B cell (primary cell): ENCODE measurements at regions of chr12 and their contacts with region 1.

Region 1: DNA sequence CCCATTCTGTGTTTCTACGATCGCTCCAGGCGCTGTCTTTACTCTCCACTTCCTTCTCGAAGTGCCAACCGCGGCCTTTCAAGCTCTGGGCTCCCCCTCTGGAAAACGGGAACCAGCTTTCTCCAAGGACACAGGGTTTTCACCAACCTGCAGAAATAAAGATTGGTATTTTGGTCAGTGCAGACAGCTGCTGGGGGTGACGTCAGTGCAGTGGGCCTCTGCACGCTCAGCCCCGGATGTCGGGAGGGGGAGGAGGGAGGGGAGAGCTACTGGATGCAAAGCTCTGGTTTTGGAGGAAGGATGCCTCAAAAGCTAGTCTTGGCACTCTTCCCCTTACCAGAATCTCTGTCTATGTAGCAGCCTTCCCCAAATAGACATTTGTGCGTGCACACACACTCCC is 19.9 kb downstream of the HRK start:
- DNase-seq: peak; percentile 77
- ATAC-seq: peak; percentile 67
- H3K4me3 ChIP-seq: no peak overlapping the region
- H3K4me3 Mint-ChIP-seq: peak overlapping the region; percentile 78
- H3K27ac ChIP-seq: no peak overlapping the region
- H3K27ac Mint-ChIP-seq: peak overlapping the region; percentile 86
- H3K4me1 ChIP-seq: peaks cover 21 to 53% of the 10 kb centered on the region in 2 donors
- H3K4me1 Mint-ChIP-seq: peaks cover 65% of the 10 kb centered on the region
- H3K27me3 ChIP-seq: no peaks in the 10 kb centered on the region
- H3K27me3 Mint-ChIP-seq: no peaks in the 10 kb centered on the region
- CTCF ChIP-seq: no peak

Region 2: GRCh38 chr12:116803013-116803736 is 58.1 kb before region 1 on chr12:
- CTCF ChIA-PET with region 1: no interaction called
- POLR2A ChIA-PET with region 1: interaction called, 4 read pairs
- intact Hi-C with region 1: loop called (anchors 1 kb)
- DNase-seq: peak; percentile 80
- ATAC-seq: peak; percentile 85
- H3K4me3 ChIP-seq: peak overlapping the region in 1 of 5 experiments; percentile 22
- H3K4me3 Mint-ChIP-seq: peak overlapping the region; percentile 59
- H3K27ac ChIP-seq: peak overlapping the region; percentile 92 to 93
- H3K27ac Mint-ChIP-seq: peak overlapping the region; percentile 95
- H3K4me1 ChIP-seq: peaks cover 33 to 46% of the 10 kb centered on the region in 2 donors
- H3K4me1 Mint-ChIP-seq: peaks cover 51% of the 10 kb centered on the region
- H3K27me3 ChIP-seq: no peaks in the 10 kb centered on the region
- H3K27me3 Mint-ChIP-seq: no peaks in the 10 kb centered on the region
- CTCF ChIP-seq: no peak